PC-9 (cell line): ENCODE measurements at regions of chr17 and their contacts with region 1.

Region 1: DNA sequence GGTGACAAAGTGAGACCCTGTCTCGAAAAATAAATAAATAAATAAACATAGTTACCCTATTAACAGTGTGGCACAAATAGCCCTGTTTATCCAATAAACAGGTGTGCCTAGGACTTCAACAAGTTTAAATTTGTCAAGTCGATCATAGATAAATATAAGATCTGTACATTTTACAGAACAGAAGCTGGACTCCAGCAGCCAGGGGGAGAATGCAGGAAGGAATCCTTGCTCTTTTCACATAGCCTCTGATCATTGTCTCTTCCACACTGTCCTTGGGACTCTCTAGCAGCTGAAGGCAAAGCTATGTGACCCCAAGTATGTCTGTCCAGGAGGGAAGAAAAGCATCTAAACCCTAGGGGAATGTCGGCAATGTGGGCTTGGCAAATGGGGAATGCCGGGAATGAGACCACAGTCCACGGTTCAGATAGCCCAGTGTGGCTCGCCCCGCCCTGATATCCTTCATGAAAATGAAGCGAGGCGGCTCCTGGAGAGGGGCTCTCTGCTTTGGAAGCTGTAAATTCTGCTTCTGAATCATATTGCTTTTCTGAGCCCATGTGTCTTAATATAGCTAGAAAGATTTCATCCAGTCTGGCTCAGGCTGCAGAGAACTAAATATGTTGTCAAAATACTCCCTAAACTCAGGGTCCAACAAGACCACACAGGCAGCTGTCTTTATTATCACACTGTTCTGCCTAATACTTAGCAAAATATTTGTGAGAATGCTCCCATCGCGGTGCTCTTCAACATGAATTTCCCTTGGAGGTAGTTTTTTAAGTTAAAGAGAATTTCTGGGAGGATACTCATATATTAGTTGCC is 24.9 kb upstream of the GRB2 start:
- DNase-seq: peak in 1 of 2 experiments; percentile 75
- H3K4me3 ChIP-seq: no peak overlapping the region
- H3K27ac ChIP-seq: no peak overlapping the region
- H3K4me1 ChIP-seq: peaks cover 17% of the 10 kb centered on the region
- H3K27me3 ChIP-seq: no peaks in the 10 kb centered on the region
- CTCF ChIP-seq: no peak

Region 2: GRCh38 chr17:75345514-75346167 is 84.7 kb before region 1 on chr17:
- CTCF ChIA-PET with region 1: interaction called, 12 read pairs
- POLR2A ChIA-PET with region 1: no interaction called
- intact Hi-C with region 1: no loop called
- DNase-seq: no peak
- H3K4me3 ChIP-seq: no peak overlapping the region
- H3K27ac ChIP-seq: no peak overlapping the region
- H3K4me1 ChIP-seq: no peaks in the 10 kb centered on the region
- H3K27me3 ChIP-seq: no peaks in the 10 kb centered on the region
- CTCF ChIP-seq: no peak

Region 3: GRCh38 chr17:75393523-75394331 is 36.6 kb before region 1 on chr17:
- CTCF ChIA-PET with region 1: interaction called, 11 read pairs
- POLR2A ChIA-PET with region 1: interaction called, 3 read pairs
- intact Hi-C with region 1: no loop called
- DNase-seq: peak; percentile 95 to 97
- H3K4me3 ChIP-seq: peak overlapping the region; percentile 69
- H3K27ac ChIP-seq: peak overlapping the region; percentile 31
- H3K4me1 ChIP-seq: peaks cover 27% of the 10 kb centered on the region
- H3K27me3 ChIP-seq: no peaks in the 10 kb centered on the region
- CTCF ChIP-seq: no peak

Region 4: GRCh38 chr17:75498726-75499213 is 68.4 kb after region 1 on chr17:
- CTCF ChIA-PET with region 1: interaction called, 3 read pairs
- POLR2A ChIA-PET with region 1: no interaction called
- intact Hi-C with region 1: loop called (anchors 5 kb)
- DNase-seq: no peak
- H3K4me3 ChIP-seq: no peak overlapping the region
- H3K27ac ChIP-seq: no peak overlapping the region
- H3K4me1 ChIP-seq: no peaks in the 10 kb centered on the region
- H3K27me3 ChIP-seq: no peaks in the 10 kb centered on the region
- CTCF ChIP-seq: no peak